Pancreas (tissue), 10 donors: ENCODE measurements at regions of chr11 and their contacts with region 1.

Region 1: GRCh38 chr11:10933455-10934292 is 75.8 kb upstream of the ZBED5 start:
- DNase-seq: peak; percentile 88 to 96 (median 92)
- ATAC-seq: peak; percentile 88 to 93 (median 92)
- H3K4me3 ChIP-seq: peak overlapping the region in 2 of 4 donors; percentile 30 to 42
- H3K27ac ChIP-seq: peak overlapping the region in 2 of 4 donors; percentile 29 to 63
- H3K4me1 ChIP-seq: peaks cover 0 to 5% (median 3%) of the 10 kb centered on the region in 3 donors
- H3K27me3 ChIP-seq: no peaks in the 10 kb centered on the region
- CTCF ChIP-seq: peak; percentile 91 to 96 (median 94)

Region 2: GRCh38 chr11:10017911-10018310 is 915.8 kb before region 1 on chr11:
- intact Hi-C with region 1: no loop called
- DNase-seq: no peak
- ATAC-seq: no peak
- H3K4me3 ChIP-seq: no peak overlapping the region
- H3K27ac ChIP-seq: no peak overlapping the region
- H3K4me1 ChIP-seq: no peaks in the 10 kb centered on the region
- H3K27me3 ChIP-seq: no peaks in the 10 kb centered on the region
- CTCF ChIP-seq: no peak

Region 3: DNA sequence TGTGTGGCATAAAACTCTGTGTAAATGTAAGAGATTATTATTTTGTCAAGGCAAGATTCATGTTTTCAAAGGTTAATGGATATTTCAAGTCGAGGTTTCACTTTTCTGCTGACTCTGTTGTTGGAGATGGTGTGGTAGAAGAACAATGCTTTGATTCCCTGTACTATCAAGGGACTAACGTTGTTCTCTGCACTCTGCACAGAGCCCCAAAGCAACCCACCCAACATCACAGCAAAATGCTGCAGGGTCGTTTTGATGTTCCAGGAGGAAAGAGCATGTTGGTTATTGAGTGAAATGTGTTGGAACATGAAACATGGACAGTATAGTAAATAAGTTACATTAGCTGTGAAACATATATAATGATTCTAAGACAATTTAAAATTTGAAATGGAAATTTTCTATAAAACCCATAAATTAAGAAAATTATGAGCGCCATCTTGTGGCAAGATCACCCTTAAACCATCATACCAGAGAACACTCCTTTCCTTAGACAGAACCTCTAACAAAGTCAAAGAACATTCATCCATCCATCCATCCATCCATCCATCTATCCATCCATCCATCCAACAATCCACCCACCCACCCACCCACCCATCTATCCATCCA is 88.6 kb after region 1 on chr11:
- intact Hi-C with region 1: loop called in 2 of 3 experiments (anchors 2 to 5 kb)
- DNase-seq: no peak
- ATAC-seq: peak in 3 of 4 donors; percentile 47 to 64 (median 52)
- H3K4me3 ChIP-seq: no peak overlapping the region
- H3K27ac ChIP-seq: no peak overlapping the region
- H3K4me1 ChIP-seq: no peaks in the 10 kb centered on the region
- H3K27me3 ChIP-seq: no peaks in the 10 kb centered on the region
- CTCF ChIP-seq: peak in 3 of 4 donors; percentile 13 to 41 (median 38)